HepG2 (cell line): ENCODE measurements at regions of chr9 and their contacts with region 1.

Region 1: DNA sequence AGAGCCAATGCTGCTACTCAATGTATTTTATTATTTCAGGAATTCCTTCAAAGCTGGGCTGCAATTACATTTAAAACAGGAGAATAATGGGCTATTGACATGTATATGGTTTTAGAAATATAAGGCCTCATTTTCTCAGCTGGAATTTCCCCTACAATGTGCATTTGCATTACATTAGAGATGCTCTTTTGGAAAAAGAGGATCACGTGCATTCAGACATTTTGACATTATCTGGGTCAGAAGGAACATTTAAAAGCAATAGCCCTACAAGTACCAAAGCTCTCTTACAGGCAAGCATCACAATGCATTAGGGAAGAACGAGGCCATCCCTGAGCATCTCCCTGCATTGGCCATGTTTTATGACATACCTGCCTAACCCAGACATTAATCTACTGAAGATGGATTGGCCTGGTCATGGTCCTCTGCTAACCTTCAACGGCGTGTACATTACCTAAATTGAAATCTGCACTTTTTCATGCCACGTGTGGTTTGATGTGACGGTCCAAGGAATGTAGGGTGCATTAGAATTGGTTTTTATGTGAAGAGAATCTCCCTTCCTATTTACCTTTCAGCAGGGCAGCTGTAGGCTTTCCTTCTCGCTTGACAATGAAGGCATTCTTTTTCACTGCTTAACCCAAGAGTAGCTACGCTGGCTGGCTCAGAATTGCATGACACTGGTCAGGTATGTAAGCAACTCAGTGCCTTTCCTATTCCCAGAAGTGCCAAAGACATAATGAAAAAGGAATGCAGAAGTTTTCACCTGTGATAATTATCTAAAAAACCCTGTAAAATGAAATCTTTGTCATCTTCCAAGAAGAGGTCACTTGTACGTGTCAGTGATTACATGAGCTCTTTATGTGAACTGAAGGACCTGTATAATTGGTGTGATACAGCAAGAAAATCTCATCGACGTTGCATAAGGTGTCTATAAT is 212.3 kb upstream of the MPDZ start:
- DNase-seq: no peak
- ATAC-seq: no peak
- H3K4me3 ChIP-seq: no peak overlapping the region
- H3K27ac ChIP-seq: no peak overlapping the region
- H3K4me1 ChIP-seq: no peaks in the 10 kb centered on the region
- H3K27me3 ChIP-seq: no peaks in the 10 kb centered on the region
- CTCF ChIP-seq: no peak
- EP300 ChIP-seq: no peak
- POLR2A ChIP-seq: no peak
- RAD21 ChIP-seq: no peak

Region 2: GRCh38 chr9:13017260-13017659 is 474.5 kb before region 1 on chr9:
- CTCF ChIA-PET with region 1: no interaction called
- POLR2A ChIA-PET with region 1: no interaction called
- in situ Hi-C with region 1: no loop called
- intact Hi-C with region 1: loop called (anchors 5 kb)
- DNase-seq: no peak
- ATAC-seq: no peak
- H3K4me3 ChIP-seq: no peak overlapping the region
- H3K27ac ChIP-seq: no peak overlapping the region
- H3K4me1 ChIP-seq: no peaks in the 10 kb centered on the region
- H3K27me3 ChIP-seq: no peaks in the 10 kb centered on the region
- CTCF ChIP-seq: no peak
- EP300 ChIP-seq: no peak
- POLR2A ChIP-seq: no peak
- RAD21 ChIP-seq: no peak

Region 3: DNA sequence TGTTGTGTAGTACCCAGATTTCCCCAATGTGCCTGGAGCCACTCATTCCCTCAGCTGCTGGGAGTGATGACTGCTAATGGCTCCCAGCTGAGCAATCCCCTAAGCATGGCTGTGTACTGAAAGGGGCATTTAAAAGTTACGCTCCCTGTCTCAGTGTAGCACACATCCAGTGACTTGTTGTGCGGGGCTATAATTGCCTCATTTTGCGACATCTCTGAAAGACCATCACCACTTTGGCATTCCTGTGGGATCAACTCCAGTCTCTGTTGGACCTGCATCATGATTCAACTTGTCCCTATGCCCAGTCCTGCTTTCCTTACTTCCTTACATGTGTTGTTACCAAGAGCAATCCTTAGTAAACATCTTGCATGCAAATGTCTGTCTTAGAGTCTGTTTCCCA is 11.1 kb before region 1 on chr9:
- CTCF ChIA-PET with region 1: no interaction called
- POLR2A ChIA-PET with region 1: no interaction called
- in situ Hi-C with region 1: no loop called
- intact Hi-C with region 1: no loop called
- DNase-seq: no peak
- ATAC-seq: no peak
- H3K4me3 ChIP-seq: no peak overlapping the region
- H3K27ac ChIP-seq: no peak overlapping the region
- H3K4me1 ChIP-seq: no peaks in the 10 kb centered on the region
- H3K27me3 ChIP-seq: no peaks in the 10 kb centered on the region
- CTCF ChIP-seq: no peak
- EP300 ChIP-seq: no peak
- POLR2A ChIP-seq: no peak
- RAD21 ChIP-seq: no peak